ENCODE measurements at regions of chr19 and their contacts with region 1.

Region 1: GRCh38 chr19:49017666-49018351 is 918 bp upstream of the LHB start:
- DNase-seq: peak; percentile 87 to 88
- H3K4me3 ChIP-seq: peak overlapping the region; percentile 49
- H3K4me3 Mint-ChIP-seq: peak overlapping the region; percentile 79
- H3K27ac Mint-ChIP-seq: no peak overlapping the region
- H3K4me1 ChIP-seq: 0 out of 2 replicates have a peak, but pooled peaks cover 9% of the 10 kb centered on the region
- H3K4me1 Mint-ChIP-seq: peaks cover 21% of the 10 kb centered on the region
- H3K27me3 ChIP-seq: no peaks in the 10 kb centered on the region; the same call in 1 of the 2 replicates
- H3K27me3 Mint-ChIP-seq: no peaks in the 10 kb centered on the region
- CTCF ChIP-seq: peak; percentile 47 to 71

Region 2: GRCh38 chr19:48999481-49000325 is 18.1 kb before region 1 on chr19:
- CTCF ChIA-PET with region 1: interaction called, 15 read pairs
- POLR2A ChIA-PET with region 1: no interaction called
- intact Hi-C with region 1: loop called (anchors 2 kb)
- DNase-seq: peak; percentile 59 to 76
- H3K4me3 ChIP-seq: no peak overlapping the region
- H3K4me3 Mint-ChIP-seq: no peak overlapping the region
- H3K27ac Mint-ChIP-seq: no peak overlapping the region
- H3K4me1 ChIP-seq: no peaks in the 10 kb centered on the region
- H3K4me1 Mint-ChIP-seq: peaks cover 8% of the 10 kb centered on the region
- H3K27me3 ChIP-seq: no peaks in the 10 kb centered on the region
- H3K27me3 Mint-ChIP-seq: no peaks in the 10 kb centered on the region
- CTCF ChIP-seq: peak; percentile 70 to 75

Region 3: GRCh38 chr19:49056010-49056901 is 38.4 kb after region 1 on chr19:
- CTCF ChIA-PET with region 1: interaction called, 12 read pairs
- POLR2A ChIA-PET with region 1: no interaction called
- intact Hi-C with region 1: no loop called
- DNase-seq: peak; percentile 70 to 83
- H3K4me3 ChIP-seq: peak overlapping the region; percentile 51
- H3K4me3 Mint-ChIP-seq: peak overlapping the region; percentile 73
- H3K27ac Mint-ChIP-seq: no peak overlapping the region
- H3K4me1 ChIP-seq: no peaks in the 10 kb centered on the region
- H3K4me1 Mint-ChIP-seq: peaks cover 8% of the 10 kb centered on the region
- H3K27me3 ChIP-seq: no peaks in the 10 kb centered on the region
- H3K27me3 Mint-ChIP-seq: peaks cover 9% of the 10 kb centered on the region
- CTCF ChIP-seq: peak; percentile 42 to 58